ENCODE measurements at regions of chr10 and their contacts with region 1.

Region 1: DNA sequence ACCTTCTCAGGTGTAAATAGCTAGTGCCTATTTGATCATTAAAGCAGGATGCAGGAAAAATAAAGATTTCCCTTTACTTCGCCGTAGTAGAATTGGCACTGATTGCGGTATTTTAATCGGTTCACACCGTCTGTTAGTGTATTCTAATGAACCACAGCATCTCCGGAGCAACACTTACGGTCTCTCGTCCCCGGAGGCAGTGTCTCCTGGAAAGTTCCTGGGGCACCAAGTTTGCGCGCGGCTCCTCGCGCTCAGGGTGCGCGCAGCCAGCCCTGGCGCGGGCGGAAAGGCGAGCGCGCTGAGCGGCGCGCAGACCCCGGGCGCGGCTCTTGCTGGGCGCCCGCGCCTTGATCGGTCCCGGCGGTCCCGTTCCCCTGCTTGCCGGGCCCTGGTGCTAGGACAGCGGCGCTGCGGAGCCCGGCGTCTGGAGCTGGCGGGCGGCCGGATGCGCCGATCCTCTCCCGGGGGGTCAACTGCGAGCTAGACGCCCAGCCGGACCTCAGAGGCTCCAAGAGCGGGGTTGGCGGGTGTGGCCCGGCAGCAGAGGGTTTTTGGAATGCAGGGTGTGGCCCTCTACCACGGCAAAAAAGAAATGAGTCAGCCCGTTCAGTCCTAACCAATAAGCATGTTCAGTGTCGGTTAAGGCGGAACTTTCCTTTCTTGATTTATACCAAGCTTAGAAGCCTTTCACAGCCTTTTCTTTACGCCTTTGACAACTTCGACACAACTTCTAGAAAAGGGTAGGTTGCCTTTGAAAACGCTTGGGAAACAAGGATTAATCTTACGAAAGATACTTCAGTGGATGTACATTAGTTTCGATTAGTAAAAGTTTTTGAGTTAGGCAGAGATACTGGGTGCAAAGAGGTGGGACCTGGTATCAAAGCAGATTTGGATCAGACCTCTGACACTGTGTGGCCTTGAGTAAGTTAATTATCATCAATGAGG is 166.8 kb upstream of the ASAH2 start:
- DNase-seq: peak in 8 of 9 donors; percentile 4 to 65 (median 16)
- ATAC-seq: peak; percentile 85
- H3K4me3 ChIP-seq: peak overlapping the region; percentile 62
- H3K4me3 Mint-ChIP-seq: peak overlapping the region; percentile 81 to 91 (median 86)
- H3K27ac ChIP-seq: no peak overlapping the region
- H3K27ac Mint-ChIP-seq: peak overlapping the region in 4 of 9 donors; percentile 30 to 93 (median 48)
- H3K4me1 ChIP-seq: peaks cover 4 to 7% of the 10 kb centered on the region in 2 donors
- H3K4me1 Mint-ChIP-seq: peaks cover 26 to 71% (median 48%) of the 10 kb centered on the region in 7 donors
- H3K27me3 ChIP-seq: no peaks in the 10 kb centered on the region
- H3K27me3 Mint-ChIP-seq: no peaks in the 10 kb centered on the region

Region 2: GRCh38 chr10:50325449-50326171 is 92.5 kb before region 1 on chr10:
- CTCF ChIA-PET with region 1: no interaction called
- POLR2A ChIA-PET with region 1: no interaction called
- intact Hi-C with region 1: loop called in 1 of 2 experiments (anchors 5 kb)
- DNase-seq: no peak
- ATAC-seq: peak; percentile 41
- H3K4me3 ChIP-seq: no peak overlapping the region
- H3K4me3 Mint-ChIP-seq: peak overlapping the region in 1 of 10 donors; percentile 70
- H3K27ac ChIP-seq: no peak overlapping the region
- H3K27ac Mint-ChIP-seq: peak overlapping the region in 1 of 9 donors; percentile 79
- H3K4me1 ChIP-seq: no peaks in the 10 kb centered on the region
- H3K4me1 Mint-ChIP-seq: peaks cover 0 to 55% (median 8%) of the 10 kb centered on the region in 7 donors
- H3K27me3 ChIP-seq: no peaks in the 10 kb centered on the region
- H3K27me3 Mint-ChIP-seq: no peaks in the 10 kb centered on the region

Region 3: GRCh38 chr10:50349554-50349953 is 68.6 kb before region 1 on chr10:
- CTCF ChIA-PET with region 1: no interaction called
- POLR2A ChIA-PET with region 1: no interaction called
- intact Hi-C with region 1: no loop called
- DNase-seq: no peak
- ATAC-seq: no peak
- H3K4me3 ChIP-seq: no peak overlapping the region
- H3K4me3 Mint-ChIP-seq: no peak overlapping the region
- H3K27ac ChIP-seq: no peak overlapping the region
- H3K27ac Mint-ChIP-seq: no peak overlapping the region
- H3K4me1 ChIP-seq: no peaks in the 10 kb centered on the region
- H3K4me1 Mint-ChIP-seq: peaks cover 4 to 27% (median 18%) of the 10 kb centered on the region in 7 donors
- H3K27me3 ChIP-seq: no peaks in the 10 kb centered on the region
- H3K27me3 Mint-ChIP-seq: no peaks in the 10 kb centered on the region

Region 4: DNA sequence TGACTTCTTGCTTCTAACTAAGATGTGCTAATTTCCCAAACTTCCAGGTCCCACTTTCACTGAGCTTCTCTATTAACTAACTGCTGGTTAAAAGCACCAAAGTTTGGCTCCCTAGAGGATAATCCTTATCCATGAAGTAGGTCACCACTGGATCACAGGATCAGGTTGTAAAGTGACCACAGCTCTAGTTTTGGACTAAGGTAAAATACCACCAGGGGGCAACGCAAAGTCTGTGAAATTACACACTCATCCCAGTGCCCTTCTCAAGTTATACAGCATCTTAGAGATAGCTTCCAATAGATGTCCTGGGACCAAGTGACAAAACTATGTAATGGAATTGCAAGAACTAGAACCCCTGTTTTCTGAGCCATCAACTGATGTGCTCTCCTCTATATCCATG is 50.4 kb before region 1 on chr10:
- CTCF ChIA-PET with region 1: no interaction called
- POLR2A ChIA-PET with region 1: no interaction called
- intact Hi-C with region 1: loop called in 1 of 2 experiments (anchors 5 kb)
- DNase-seq: peak in 1 of 9 donors; percentile 5
- ATAC-seq: peak; percentile 31
- H3K4me3 ChIP-seq: no peak overlapping the region
- H3K4me3 Mint-ChIP-seq: no peak overlapping the region
- H3K27ac ChIP-seq: no peak overlapping the region
- H3K27ac Mint-ChIP-seq: no peak overlapping the region
- H3K4me1 ChIP-seq: no peaks in the 10 kb centered on the region
- H3K4me1 Mint-ChIP-seq: peaks cover 2 to 18% (median 15%) of the 10 kb centered on the region in 7 donors
- H3K27me3 ChIP-seq: no peaks in the 10 kb centered on the region
- H3K27me3 Mint-ChIP-seq: no peaks in the 10 kb centered on the region

Region 5: DNA sequence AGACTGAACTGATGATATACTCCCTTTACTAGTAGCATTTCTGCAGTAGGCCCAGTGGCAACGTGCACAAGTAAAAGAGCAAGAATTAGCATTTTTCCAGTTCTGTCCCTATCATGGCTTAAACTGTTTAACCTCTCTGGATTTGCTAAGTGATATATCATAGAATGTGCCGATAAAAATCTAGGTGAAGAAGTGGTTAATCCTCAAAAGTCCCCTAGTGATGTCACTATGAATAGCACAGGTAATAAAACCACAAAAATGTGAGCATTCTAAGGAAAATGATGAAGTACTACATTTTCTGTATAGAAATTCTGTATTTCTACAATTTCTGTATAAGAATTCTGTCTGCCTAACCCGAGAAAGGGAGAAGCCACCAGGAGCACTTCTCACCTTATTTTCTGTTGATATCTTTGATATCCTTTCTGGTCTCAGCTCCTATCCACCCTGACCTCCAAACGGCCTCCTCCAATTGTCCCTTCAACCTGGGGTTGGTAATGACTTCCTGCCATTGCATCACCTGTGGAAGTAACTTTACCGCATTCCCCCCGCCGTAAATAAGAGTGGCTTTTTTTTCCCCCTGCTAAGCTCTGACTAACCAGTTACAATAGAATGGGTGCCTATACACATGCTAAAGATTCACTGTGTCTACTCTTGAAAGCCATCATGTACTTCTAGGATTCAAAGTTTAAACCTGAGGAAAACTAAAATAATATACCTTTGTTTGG is 10.9 kb before region 1 on chr10:
- CTCF ChIA-PET with region 1: no interaction called
- POLR2A ChIA-PET with region 1: no interaction called
- intact Hi-C with region 1: loop called in 1 of 2 experiments (anchors 2 kb)
- DNase-seq: no peak
- ATAC-seq: no peak
- H3K4me3 ChIP-seq: no peak overlapping the region
- H3K4me3 Mint-ChIP-seq: no peak overlapping the region
- H3K27ac ChIP-seq: no peak overlapping the region
- H3K27ac Mint-ChIP-seq: no peak overlapping the region
- H3K4me1 ChIP-seq: no peaks in the 10 kb centered on the region
- H3K4me1 Mint-ChIP-seq: peaks cover 11 to 20% (median 17%) of the 10 kb centered on the region in 7 donors
- H3K27me3 ChIP-seq: no peaks in the 10 kb centered on the region
- H3K27me3 Mint-ChIP-seq: no peaks in the 10 kb centered on the region

Region 6: DNA sequence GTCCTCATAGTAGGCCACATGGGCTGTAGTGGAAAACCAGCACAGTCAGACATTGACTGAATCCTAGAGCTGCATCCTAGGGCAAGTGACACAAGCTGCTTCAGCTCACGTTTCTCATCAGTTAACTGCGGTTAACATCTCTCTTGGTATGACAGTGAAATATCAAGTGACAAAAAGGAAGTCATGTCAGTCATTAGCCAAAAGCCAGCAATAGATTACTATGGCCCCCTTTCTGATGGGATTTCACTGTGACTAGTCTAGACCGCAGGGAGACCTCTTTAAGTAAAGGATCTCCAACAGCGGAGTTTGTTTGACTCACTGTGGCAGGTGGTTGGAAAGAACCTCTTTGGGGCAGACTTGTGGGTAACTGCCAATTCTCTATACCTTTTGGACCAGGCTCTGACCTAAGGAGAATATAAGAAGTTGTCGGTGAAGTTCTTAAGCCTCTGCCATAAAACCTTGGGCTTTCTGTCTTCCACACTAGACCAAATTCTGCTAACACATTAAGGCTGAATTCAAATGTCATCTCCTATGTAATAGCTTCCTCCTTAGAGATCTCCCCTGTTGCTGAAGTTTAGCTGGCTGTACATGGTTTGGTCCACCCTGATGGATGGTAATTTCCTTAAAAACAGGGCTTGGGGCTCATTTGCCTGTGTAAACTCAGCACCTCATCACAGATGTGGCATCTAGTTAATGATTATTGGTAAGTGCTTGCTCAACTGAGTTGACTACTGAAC is 90.3 kb after region 1 on chr10:
- CTCF ChIA-PET with region 1: no interaction called
- POLR2A ChIA-PET with region 1: no interaction called
- intact Hi-C with region 1: loop called in 1 of 2 experiments (anchors 5 kb)
- DNase-seq: peak in 1 of 9 donors; percentile 29
- ATAC-seq: peak; percentile 49
- H3K4me3 ChIP-seq: no peak overlapping the region
- H3K4me3 Mint-ChIP-seq: no peak overlapping the region
- H3K27ac ChIP-seq: no peak overlapping the region
- H3K27ac Mint-ChIP-seq: peak overlapping the region in 1 of 9 donors; percentile 35
- H3K4me1 ChIP-seq: peaks cover 9 to 45% of the 10 kb centered on the region in 2 donors
- H3K4me1 Mint-ChIP-seq: peaks cover 31 to 76% (median 68%) of the 10 kb centered on the region in 7 donors
- H3K27me3 ChIP-seq: no peaks in the 10 kb centered on the region
- H3K27me3 Mint-ChIP-seq: no peaks in the 10 kb centered on the region

Region 7: GRCh38 chr10:50636618-50637579 is 218.7 kb after region 1 on chr10:
- CTCF ChIA-PET with region 1: no interaction called
- POLR2A ChIA-PET with region 1: no interaction called
- intact Hi-C with region 1: loop called in 1 of 2 experiments (anchors 2 kb)
- DNase-seq: peak in 3 of 9 donors; percentile 19 to 34 (median 29)
- ATAC-seq: peak; percentile 84
- H3K4me3 ChIP-seq: peak overlapping the region; percentile 41
- H3K4me3 Mint-ChIP-seq: peak overlapping the region; percentile 52 to 78 (median 72)
- H3K27ac ChIP-seq: peak overlapping the region; percentile 11
- H3K27ac Mint-ChIP-seq: peak overlapping the region; percentile 20 to 73 (median 55)
- H3K4me1 ChIP-seq: peaks cover 24 to 27% of the 10 kb centered on the region in 2 donors
- H3K4me1 Mint-ChIP-seq: peaks cover 22 to 39% (median 35%) of the 10 kb centered on the region in 7 donors
- H3K27me3 ChIP-seq: no peaks in the 10 kb centered on the region
- H3K27me3 Mint-ChIP-seq: peaks cover 0 to 56% (median 0%) of the 10 kb centered on the region in 5 donors

Region 8: DNA sequence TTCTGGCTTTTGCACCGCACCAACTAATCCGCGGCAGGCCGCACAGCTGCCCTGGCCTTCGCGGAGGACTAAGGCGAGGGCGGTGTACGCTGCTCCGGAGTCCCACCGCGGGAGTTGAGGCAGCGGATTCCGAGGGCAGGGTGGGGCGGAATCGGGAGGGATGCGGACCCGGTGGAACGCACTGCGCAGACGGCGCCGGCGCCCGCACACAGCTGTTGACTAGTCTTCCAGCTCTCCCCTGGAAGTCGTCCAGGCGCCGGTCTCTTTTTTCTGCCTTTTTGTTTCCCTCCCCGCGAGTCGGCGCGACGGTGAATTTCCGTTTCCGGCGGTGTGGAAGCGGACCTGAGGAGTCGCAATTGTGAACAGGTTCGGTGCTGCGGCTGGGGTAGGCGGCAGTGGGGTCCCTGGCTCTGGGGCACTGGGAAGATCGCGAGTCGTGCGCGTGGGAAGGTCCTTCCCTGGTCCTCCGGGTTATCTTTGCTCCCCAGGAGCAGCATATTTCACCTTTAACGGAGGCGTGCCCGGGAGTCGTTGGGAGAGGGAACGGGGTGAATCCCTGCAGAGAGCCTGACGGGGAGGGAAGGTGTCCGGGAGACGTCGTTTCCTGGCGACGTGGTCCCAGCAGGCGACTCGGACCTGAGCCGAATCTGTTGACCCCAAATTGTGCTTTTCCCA is 321.6 kb after region 1 on chr10 and contains the start of gene ASAH2B:
- CTCF ChIA-PET with region 1: no interaction called
- POLR2A ChIA-PET with region 1: no interaction called
- intact Hi-C with region 1: loop called in 1 of 2 experiments (anchors 10 kb)
- DNase-seq: peak; percentile 42 to 79 (median 72)
- ATAC-seq: peak; percentile 77
- H3K4me3 ChIP-seq: peak within 1 kb of the TSS; percentile 92
- H3K4me3 Mint-ChIP-seq: peak within 1 kb of the TSS; percentile 86 to 99 (median 98)
- H3K27ac ChIP-seq: peak within 1 kb of the TSS; percentile 66
- H3K27ac Mint-ChIP-seq: peak within 1 kb of the TSS; percentile 89 to 97 (median 93)
- H3K4me1 ChIP-seq: no peaks in the 10 kb centered on the region
- H3K4me1 Mint-ChIP-seq: peaks cover 18 to 43% (median 39%) of the 10 kb centered on the region in 7 donors
- H3K27me3 ChIP-seq: no peaks in the 10 kb centered on the region
- H3K27me3 Mint-ChIP-seq: peaks cover 0 to 24% (median 0%) of the 10 kb centered on the region in 5 donors
- total RNA-seq, gene ASAH2B: 1.7 to 3.9 (median 2.3) TPM